Panc1 (cell line): ENCODE measurements at regions of chr2 and their contacts with region 1.

Region 1: DNA sequence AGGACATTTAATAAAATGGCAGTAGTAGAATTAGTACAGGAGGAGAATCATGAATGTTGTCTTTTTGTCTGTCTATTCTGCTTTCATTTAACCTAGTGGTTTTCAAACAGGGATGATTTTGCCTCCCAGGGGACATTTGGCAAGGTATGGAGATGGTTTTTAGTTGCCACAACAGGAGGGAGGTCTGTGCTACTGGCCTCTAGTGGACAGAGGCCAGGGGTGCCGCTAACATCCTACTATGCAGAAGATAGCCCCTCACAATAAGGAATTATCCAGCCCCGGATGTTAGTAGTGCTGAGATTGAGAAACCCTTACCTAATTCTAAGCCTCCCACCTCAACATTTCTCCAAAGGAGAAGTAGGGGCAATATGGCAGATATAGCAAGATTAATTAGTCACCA is 18.3 kb downstream of the FASTKD2 start:
- DNase-seq: no peak
- ATAC-seq: no peak; the same call in 1 of the 2 replicates
- H3K4me3 ChIP-seq: no peak overlapping the region
- H3K27ac ChIP-seq: no peak overlapping the region
- H3K4me1 ChIP-seq: no peaks in the 10 kb centered on the region
- H3K27me3 ChIP-seq: no peaks in the 10 kb centered on the region
- CTCF ChIP-seq: peak; percentile 79

Region 2: GRCh38 chr2:205629027-205629817 is 1154.5 kb before region 1 on chr2:
- CTCF ChIA-PET with region 1: no interaction called
- POLR2A ChIA-PET with region 1: no interaction called
- in situ Hi-C with region 1: no loop called
- intact Hi-C with region 1: no loop called
- DNase-seq: no peak
- ATAC-seq: no peak
- H3K4me3 ChIP-seq: no peak overlapping the region
- H3K27ac ChIP-seq: no peak overlapping the region
- H3K4me1 ChIP-seq: no peaks in the 10 kb centered on the region
- H3K27me3 ChIP-seq: no peaks in the 10 kb centered on the region
- CTCF ChIP-seq: no peak

Region 3: GRCh38 chr2:206572725-206573124 is 211.0 kb before region 1 on chr2:
- CTCF ChIA-PET with region 1: interaction called, 10 read pairs
- POLR2A ChIA-PET with region 1: no interaction called
- in situ Hi-C with region 1: no loop called
- intact Hi-C with region 1: no loop called
- DNase-seq: no peak
- ATAC-seq: no peak
- H3K4me3 ChIP-seq: no peak overlapping the region
- H3K27ac ChIP-seq: no peak overlapping the region
- H3K4me1 ChIP-seq: no peaks in the 10 kb centered on the region
- H3K27me3 ChIP-seq: peaks cover 2% of the 10 kb centered on the region; the same call in 1 of the 2 replicates
- CTCF ChIP-seq: no peak

Region 4: GRCh38 chr2:206693399-206694137 is 90.2 kb before region 1 on chr2:
- CTCF ChIA-PET with region 1: no interaction called
- POLR2A ChIA-PET with region 1: no interaction called
- in situ Hi-C with region 1: no loop called
- intact Hi-C with region 1: loop called (anchors 1 kb)
- DNase-seq: peak; percentile 47
- ATAC-seq: peak; percentile 90
- H3K4me3 ChIP-seq: no peak overlapping the region
- H3K27ac ChIP-seq: no peak overlapping the region
- H3K4me1 ChIP-seq: no peaks in the 10 kb centered on the region
- H3K27me3 ChIP-seq: no peaks in the 10 kb centered on the region
- CTCF ChIP-seq: peak; percentile 72

Region 5: DNA sequence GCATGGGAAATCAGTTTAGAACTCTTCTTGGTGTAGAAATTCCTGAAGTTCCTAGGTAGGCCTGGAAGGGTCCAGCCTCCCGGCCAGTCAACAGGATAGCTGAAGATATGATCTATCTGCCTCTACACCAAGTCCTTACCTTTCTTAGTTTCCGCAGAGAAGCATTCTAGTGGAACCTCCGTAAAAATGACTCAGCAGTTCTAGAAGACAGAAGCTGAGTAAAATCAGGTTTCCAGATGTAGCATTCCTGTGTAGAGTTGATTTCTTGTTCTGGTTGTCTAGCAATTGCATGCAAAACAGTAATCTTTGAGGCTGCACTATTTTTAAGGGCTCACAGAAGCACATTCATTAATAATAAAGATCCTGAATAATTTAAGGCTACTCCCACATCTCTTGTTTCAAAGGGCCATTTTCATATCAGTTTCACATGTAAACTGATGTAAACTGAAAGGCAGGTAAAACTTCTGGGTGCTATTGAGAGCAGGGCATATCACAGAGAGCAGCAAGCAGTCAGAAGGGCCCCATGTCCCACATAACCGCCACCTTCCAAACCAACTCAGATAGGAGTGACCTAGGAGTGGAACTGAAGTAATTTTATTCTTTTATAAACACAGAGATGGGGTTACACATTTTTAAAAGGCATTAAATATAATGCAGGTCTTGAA is 62.3 kb before region 1 on chr2:
- CTCF ChIA-PET with region 1: interaction called, 10 read pairs
- POLR2A ChIA-PET with region 1: no interaction called
- in situ Hi-C with region 1: no loop called
- intact Hi-C with region 1: no loop called
- DNase-seq: no peak
- ATAC-seq: no peak
- H3K4me3 ChIP-seq: no peak overlapping the region
- H3K27ac ChIP-seq: no peak overlapping the region
- H3K4me1 ChIP-seq: no peaks in the 10 kb centered on the region
- H3K27me3 ChIP-seq: no peaks in the 10 kb centered on the region
- CTCF ChIP-seq: no peak

Region 6: GRCh38 chr2:206856513-206856912 is 72.8 kb after region 1 on chr2:
- CTCF ChIA-PET with region 1: no interaction called
- POLR2A ChIA-PET with region 1: no interaction called
- in situ Hi-C with region 1: no loop called
- intact Hi-C with region 1: no loop called
- DNase-seq: no peak
- ATAC-seq: no peak
- H3K4me3 ChIP-seq: no peak overlapping the region
- H3K27ac ChIP-seq: no peak overlapping the region
- H3K4me1 ChIP-seq: no peaks in the 10 kb centered on the region
- H3K27me3 ChIP-seq: no peaks in the 10 kb centered on the region
- CTCF ChIP-seq: no peak

Region 7: GRCh38 chr2:207692206-207693065 is 908.7 kb after region 1 on chr2:
- CTCF ChIA-PET with region 1: no interaction called
- POLR2A ChIA-PET with region 1: no interaction called
- in situ Hi-C with region 1: no loop called
- intact Hi-C with region 1: no loop called
- DNase-seq: no peak
- ATAC-seq: peak; percentile 84
- H3K4me3 ChIP-seq: no peak overlapping the region
- H3K27ac ChIP-seq: no peak overlapping the region
- H3K4me1 ChIP-seq: peaks cover 3% of the 10 kb centered on the region; the same call in 1 of the 2 replicates
- H3K27me3 ChIP-seq: no peaks in the 10 kb centered on the region
- CTCF ChIP-seq: peak; percentile 82